Heart right ventricle (tissue), 16 donors: ENCODE measurements at regions of chr11 and their contacts with region 1.

Region 1: GRCh38 chr11:79045800-79046304 is 395.0 kb downstream of the TENM4 start:
- DNase-seq: no peak
- ATAC-seq: no peak
- H3K4me3 ChIP-seq: no peak overlapping the region
- H3K27ac ChIP-seq: no peak overlapping the region
- H3K4me1 ChIP-seq: peaks cover 0 to 5% (median 0%) of the 10 kb centered on the region in 9 donors
- H3K27me3 ChIP-seq: peaks cover 0 to 13% (median 6%) of the 10 kb centered on the region in 7 donors
- CTCF ChIP-seq: no peak

Region 2: DNA sequence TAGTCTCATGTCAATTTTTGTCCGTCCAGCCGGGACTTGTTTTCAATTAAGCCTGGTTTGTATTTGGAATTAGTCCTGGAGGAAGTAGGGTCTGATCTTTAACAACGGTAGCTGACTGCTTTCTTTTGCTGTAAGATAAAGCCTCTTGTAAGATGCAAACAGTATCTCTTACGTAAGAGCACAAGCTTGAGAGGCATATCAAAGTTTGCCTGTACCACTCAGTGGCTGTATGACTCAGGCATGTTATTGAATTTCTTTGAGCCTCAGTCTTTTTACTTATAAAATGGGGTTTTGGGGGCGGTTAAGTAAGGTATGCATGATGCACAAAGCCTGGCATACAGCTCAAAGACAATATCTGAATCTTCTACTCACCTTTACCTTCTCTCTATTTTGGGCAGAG is 272.8 kb before region 1 on chr11:
- intact Hi-C with region 1: loop called in 1 of 10 experiments (anchors 10 kb)
- DNase-seq: no peak
- ATAC-seq: no peak
- H3K4me3 ChIP-seq: no peak overlapping the region
- H3K27ac ChIP-seq: no peak overlapping the region
- H3K4me1 ChIP-seq: peaks cover 0 to 11% (median under 1%) of the 10 kb centered on the region in 9 donors
- H3K27me3 ChIP-seq: no peaks in the 10 kb centered on the region
- CTCF ChIP-seq: no peak

Region 3: DNA sequence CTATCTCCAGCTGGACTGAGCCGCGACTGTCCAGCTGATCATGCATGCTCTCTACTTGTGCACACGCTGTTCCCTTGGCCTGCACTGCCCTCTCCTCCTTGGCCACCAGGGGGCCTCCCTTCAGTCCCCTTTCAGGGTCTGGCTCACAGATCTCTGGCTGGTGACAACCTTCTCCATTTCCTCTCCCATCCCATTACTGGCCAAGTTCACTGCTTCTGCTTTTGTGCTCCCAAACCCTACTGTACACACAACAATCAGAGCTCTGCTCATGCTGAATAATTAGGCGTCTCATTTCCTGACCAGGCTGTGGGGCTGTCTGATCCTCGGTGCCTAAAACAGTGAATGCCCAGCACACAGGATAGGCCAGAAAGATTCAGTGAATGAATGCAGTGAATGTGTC is 247.2 kb before region 1 on chr11:
- intact Hi-C with region 1: loop called in 1 of 10 experiments (anchors 10 kb)
- DNase-seq: peak; percentile 75 to 76
- ATAC-seq: peak; percentile 72 to 93 (median 86)
- H3K4me3 ChIP-seq: no peak overlapping the region
- H3K27ac ChIP-seq: peak overlapping the region in 1 of 10 donors; percentile 81
- H3K4me1 ChIP-seq: peaks cover 0 to 51% (median 21%) of the 10 kb centered on the region in 9 donors
- H3K27me3 ChIP-seq: no peaks in the 10 kb centered on the region
- CTCF ChIP-seq: peak; percentile 66 to 89 (median 82)